ENCODE measurements at regions of chr1 and their contacts with region 1.

Region 1: GRCh38 chr1:40257688-40258444 is at the start of gene ZMPSTE24:
- DNase-seq: peak; percentile 98
- ATAC-seq: peak; percentile 99
- H3K4me3 ChIP-seq: peak within 1 kb of the TSS; percentile 81
- H3K27ac ChIP-seq: peak within 1 kb of the TSS; percentile 89
- H3K4me1 ChIP-seq: peaks cover 2% of the 10 kb centered on the region; the same call in 1 of the 2 replicates
- H3K27me3 ChIP-seq: no peaks in the 10 kb centered on the region
- CTCF ChIP-seq: no peak
- POLR2A ChIP-seq: peak; percentile 88; the same call in 1 of the 2 replicates
- RAD21 ChIP-seq: no peak; the same call in 1 of the 2 replicates
- total RNA-seq, gene ZMPSTE24: 28.9 and 90.8 TPM in 2 replicates

Region 2: GRCh38 chr1:38474738-38475623 is 1782.9 kb before region 1 on chr1:
- CTCF ChIA-PET with region 1: no interaction called
- POLR2A ChIA-PET with region 1: no interaction called
- dilution Hi-C with region 1: no loop called
- in situ Hi-C with region 1: no loop called
- intact Hi-C with region 1: no loop called
- DNase-seq: no peak
- ATAC-seq: no peak
- H3K4me3 ChIP-seq: no peak overlapping the region
- H3K27ac ChIP-seq: no peak overlapping the region
- H3K4me1 ChIP-seq: no peaks in the 10 kb centered on the region
- H3K27me3 ChIP-seq: peaks cover 17% of the 10 kb centered on the region
- CTCF ChIP-seq: no peak
- POLR2A ChIP-seq: no peak
- RAD21 ChIP-seq: no peak

Region 3: GRCh38 chr1:40078512-40079333 is 179.1 kb before region 1 on chr1:
- CTCF ChIA-PET with region 1: no interaction called
- POLR2A ChIA-PET with region 1: no interaction called
- dilution Hi-C with region 1: no loop called
- in situ Hi-C with region 1: no loop called
- intact Hi-C with region 1: loop called (anchors 2 kb)
- DNase-seq: peak; percentile 46
- ATAC-seq: peak; percentile 53; the same call in 1 of the 2 replicates
- H3K4me3 ChIP-seq: no peak overlapping the region
- H3K27ac ChIP-seq: no peak overlapping the region
- H3K4me1 ChIP-seq: peaks cover 5% of the 10 kb centered on the region
- H3K27me3 ChIP-seq: no peaks in the 10 kb centered on the region
- CTCF ChIP-seq: peak; percentile 59
- POLR2A ChIP-seq: no peak
- RAD21 ChIP-seq: peak; percentile 48

Region 4: GRCh38 chr1:40161125-40161887 is 96.6 kb before region 1 on chr1 and contains the start of gene RLF:
- CTCF ChIA-PET with region 1: no interaction called
- POLR2A ChIA-PET with region 1: no interaction called
- dilution Hi-C with region 1: no loop called
- in situ Hi-C with region 1: no loop called
- intact Hi-C with region 1: loop called (anchors 1 kb)
- DNase-seq: peak; percentile 93
- ATAC-seq: peak; percentile 97
- H3K4me3 ChIP-seq: peak within 1 kb of the TSS; percentile 79
- H3K27ac ChIP-seq: peak within 1 kb of the TSS; percentile 90
- H3K4me1 ChIP-seq: peaks cover 3% of the 10 kb centered on the region
- H3K27me3 ChIP-seq: peaks cover 3% of the 10 kb centered on the region; the same call in 1 of the 2 replicates
- CTCF ChIP-seq: no peak
- POLR2A ChIP-seq: peak; percentile 99
- RAD21 ChIP-seq: no peak
- total RNA-seq, gene RLF: 29.8 and 33.1 TPM in 2 replicates

Region 5: DNA sequence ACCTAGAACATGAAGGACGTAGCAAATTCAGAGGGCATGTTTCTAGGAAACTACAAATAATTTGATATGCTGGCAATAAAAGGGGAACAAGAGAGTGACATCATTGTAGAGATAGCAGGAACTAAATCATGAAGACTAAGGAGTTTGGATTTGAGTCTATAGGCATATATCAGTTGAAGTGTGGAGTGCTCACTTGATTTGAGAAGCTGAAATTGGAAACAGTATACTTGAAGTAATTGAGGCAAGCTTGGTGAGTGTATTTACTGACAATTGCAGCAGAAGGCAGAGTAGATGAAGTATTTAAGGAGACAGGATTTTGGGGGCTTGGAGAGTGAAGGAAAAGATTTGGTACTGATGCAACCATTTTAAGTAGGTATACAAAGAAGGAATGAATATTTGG is 16.5 kb before region 1 on chr1:
- CTCF ChIA-PET with region 1: no interaction called
- POLR2A ChIA-PET with region 1: no interaction called
- dilution Hi-C with region 1: no loop called
- in situ Hi-C with region 1: no loop called
- intact Hi-C with region 1: loop called (anchors 2 kb)
- DNase-seq: no peak
- ATAC-seq: peak; percentile 34
- H3K4me3 ChIP-seq: no peak overlapping the region
- H3K27ac ChIP-seq: peak overlapping the region; percentile 66
- H3K4me1 ChIP-seq: peaks cover 3% of the 10 kb centered on the region; the same call in 1 of the 2 replicates
- H3K27me3 ChIP-seq: no peaks in the 10 kb centered on the region
- CTCF ChIP-seq: no peak
- POLR2A ChIP-seq: no peak
- RAD21 ChIP-seq: no peak

Region 6: DNA sequence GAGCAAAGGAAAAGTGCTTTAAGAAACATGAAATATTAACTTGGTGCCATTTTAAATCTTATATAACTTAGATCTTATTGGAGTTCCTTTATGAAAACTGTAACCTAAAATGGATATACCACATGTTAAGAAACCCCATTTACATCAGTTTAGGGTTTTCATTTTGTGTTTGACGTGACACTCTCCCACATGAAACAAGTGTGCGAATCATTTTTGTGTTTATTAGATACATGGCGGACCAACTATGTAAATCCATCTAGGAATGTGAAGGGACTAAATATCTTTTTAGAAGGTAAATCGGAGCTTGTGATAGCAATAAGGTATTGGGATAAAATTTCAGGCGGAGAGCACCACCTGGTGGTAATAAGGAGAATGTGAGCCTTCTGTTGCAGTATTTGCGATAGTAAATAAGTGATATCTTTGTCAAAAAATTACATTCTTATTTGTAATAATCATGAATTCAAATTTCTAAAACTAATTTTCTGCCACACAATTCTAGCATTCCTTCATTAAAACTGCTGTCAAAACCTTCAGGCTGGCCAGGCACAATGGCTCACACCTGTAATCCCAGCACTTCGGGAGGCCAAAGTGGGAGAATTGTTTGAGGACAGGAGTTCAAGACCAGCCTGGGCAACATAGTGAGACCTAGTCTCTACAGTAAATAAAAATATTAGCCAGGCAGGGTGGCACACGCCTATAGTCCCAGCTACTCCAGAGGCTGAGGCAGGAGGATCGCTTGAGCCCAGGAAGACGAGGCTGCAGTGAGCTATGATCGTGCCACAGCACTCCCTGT is 147.0 kb after region 1 on chr1:
- CTCF ChIA-PET with region 1: no interaction called
- POLR2A ChIA-PET with region 1: no interaction called
- dilution Hi-C with region 1: no loop called
- in situ Hi-C with region 1: no loop called
- intact Hi-C with region 1: loop called (anchors 10 kb)
- DNase-seq: peak; percentile 79
- ATAC-seq: peak; percentile 82
- H3K4me3 ChIP-seq: no peak overlapping the region
- H3K27ac ChIP-seq: no peak overlapping the region
- H3K4me1 ChIP-seq: peaks cover 2% of the 10 kb centered on the region; the same call in 1 of the 2 replicates
- H3K27me3 ChIP-seq: no peaks in the 10 kb centered on the region
- CTCF ChIP-seq: peak; percentile 80
- POLR2A ChIP-seq: no peak
- RAD21 ChIP-seq: peak; percentile 90